Activated B cell treated with CpG ODN at 0.5 μM for 24 hours (primary cell): ENCODE measurements at regions of chr10 and their contacts with region 1.

Region 1: DNA sequence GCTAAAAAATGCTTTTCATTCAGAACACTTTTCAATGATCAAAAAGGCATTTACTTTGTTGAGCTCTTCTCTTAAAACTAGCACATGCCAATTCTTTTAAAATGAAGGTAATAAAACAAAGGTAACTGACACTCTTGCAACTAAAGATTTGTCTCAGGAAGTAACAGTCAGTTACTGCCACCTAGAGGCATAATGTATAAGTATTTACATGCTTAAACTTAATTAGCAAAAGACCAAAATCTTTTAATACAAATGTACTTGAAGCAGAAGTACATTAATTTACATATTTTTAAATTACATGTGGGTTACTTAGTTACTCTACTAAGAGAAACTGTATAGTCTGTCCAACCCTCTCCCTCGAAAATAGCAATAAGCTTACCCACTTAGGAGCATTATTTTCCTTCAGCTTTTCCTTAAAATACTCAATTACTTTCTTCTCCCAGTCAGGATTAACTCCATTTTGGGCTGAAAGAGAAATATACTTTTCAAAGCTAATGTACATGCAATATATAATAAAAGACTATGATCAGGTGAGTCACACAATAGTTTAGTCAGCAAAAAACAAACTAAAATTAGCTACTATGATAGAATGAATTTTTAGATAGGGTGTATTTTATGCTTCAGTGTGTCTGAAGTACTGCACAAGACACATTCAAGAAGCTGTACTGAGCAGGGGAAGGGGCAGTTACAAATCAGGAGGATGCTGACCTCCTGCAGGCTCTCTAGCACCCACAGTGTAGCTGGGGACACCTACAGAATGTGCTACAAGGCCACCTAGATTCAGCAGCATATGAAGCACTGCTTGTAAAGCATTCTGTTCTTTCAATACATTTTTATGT is 13.0 kb downstream of the MCMBP start:
- DNase-seq: no peak
- ATAC-seq: peak; percentile 50
- H3K4me3 Mint-ChIP-seq: no peak overlapping the region
- H3K27ac Mint-ChIP-seq: no peak overlapping the region
- H3K4me1 Mint-ChIP-seq: peaks cover 30% of the 10 kb centered on the region
- H3K27me3 Mint-ChIP-seq: no peaks in the 10 kb centered on the region
- CTCF ChIP-seq: peak; percentile 46

Region 2: DNA sequence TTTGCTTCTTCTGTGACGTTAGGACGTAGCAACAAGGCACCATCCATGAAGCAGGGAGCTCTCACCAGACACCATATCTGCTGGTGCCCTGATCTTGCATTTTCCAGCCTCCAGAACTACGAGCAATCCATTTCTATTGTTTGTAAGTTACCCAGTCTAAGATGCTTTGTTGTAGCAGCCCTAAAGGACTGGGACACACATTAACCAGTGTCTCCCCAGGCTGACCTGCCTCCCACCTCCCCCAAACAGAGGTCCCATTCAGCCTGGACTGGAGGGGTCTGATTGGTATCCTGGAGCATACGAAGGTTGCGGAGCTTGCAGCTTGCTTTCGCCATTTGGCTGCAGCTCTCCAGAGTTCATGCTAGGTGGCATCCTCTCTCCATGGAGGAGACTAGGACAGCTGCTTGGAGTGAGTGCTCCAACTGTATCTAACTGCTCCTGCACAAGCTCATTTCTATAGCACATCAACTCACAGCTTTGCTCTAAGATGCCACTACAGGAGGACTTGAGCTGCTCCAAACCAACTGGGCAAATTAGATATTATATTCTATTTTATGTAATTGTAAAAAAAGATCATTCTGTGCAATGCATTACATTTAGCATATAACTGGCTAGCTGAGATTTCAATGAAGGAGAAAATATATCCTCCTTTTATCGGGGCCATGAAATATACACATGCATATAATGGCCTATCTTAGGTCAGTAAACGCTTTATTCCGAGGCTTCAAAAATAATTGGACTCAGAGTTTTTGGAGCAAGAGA is 660.2 kb before region 1 on chr10:
- CTCF ChIA-PET with region 1: interaction called, 7 read pairs
- POLR2A ChIA-PET with region 1: no interaction called
- intact Hi-C with region 1: loop called (anchors 5 kb)
- DNase-seq: no peak
- ATAC-seq: peak; percentile 88
- H3K4me3 Mint-ChIP-seq: no peak overlapping the region
- H3K27ac Mint-ChIP-seq: no peak overlapping the region
- H3K4me1 Mint-ChIP-seq: peaks cover 3% of the 10 kb centered on the region
- H3K27me3 Mint-ChIP-seq: peaks cover 3% of the 10 kb centered on the region
- CTCF ChIP-seq: no peak

Region 3: DNA sequence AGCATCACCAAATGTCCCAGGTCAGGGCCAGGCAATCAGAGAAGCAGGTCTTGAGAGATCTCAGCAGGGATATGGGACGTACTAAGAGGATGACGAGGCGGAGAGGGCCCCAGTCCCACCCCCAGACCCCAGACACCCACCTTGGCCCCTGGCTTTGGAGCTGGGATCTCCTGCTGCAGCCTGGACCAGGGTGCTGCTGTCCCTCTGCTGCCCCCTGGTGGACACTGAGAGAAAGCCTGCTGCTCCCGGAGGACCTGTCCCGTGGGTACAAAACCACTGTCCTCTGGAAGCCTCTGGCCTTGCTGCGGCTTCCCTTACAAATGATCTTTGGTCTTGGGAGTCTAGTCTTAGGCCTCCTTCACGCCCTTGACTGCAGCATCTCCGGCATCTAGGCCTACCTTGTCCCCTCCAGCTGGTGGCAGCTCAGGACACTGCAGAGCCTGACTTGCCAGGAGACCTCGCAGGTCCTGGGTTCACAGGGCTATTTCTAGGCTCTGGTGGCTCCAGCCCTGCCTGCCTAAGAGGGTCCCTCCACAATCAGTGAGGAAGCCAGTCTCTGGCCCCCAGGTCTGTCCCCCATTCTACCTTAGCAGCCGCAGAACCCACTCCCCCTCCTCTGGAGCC is 414.2 kb before region 1 on chr10:
- CTCF ChIA-PET with region 1: no interaction called
- POLR2A ChIA-PET with region 1: no interaction called
- intact Hi-C with region 1: loop called (anchors 5 kb)
- DNase-seq: peak; percentile 74
- ATAC-seq: peak; percentile 70
- H3K4me3 Mint-ChIP-seq: no peak overlapping the region
- H3K27ac Mint-ChIP-seq: peak overlapping the region; percentile 61
- H3K4me1 Mint-ChIP-seq: peaks cover 31% of the 10 kb centered on the region
- H3K27me3 Mint-ChIP-seq: no peaks in the 10 kb centered on the region
- CTCF ChIP-seq: peak; percentile 57

Region 4: DNA sequence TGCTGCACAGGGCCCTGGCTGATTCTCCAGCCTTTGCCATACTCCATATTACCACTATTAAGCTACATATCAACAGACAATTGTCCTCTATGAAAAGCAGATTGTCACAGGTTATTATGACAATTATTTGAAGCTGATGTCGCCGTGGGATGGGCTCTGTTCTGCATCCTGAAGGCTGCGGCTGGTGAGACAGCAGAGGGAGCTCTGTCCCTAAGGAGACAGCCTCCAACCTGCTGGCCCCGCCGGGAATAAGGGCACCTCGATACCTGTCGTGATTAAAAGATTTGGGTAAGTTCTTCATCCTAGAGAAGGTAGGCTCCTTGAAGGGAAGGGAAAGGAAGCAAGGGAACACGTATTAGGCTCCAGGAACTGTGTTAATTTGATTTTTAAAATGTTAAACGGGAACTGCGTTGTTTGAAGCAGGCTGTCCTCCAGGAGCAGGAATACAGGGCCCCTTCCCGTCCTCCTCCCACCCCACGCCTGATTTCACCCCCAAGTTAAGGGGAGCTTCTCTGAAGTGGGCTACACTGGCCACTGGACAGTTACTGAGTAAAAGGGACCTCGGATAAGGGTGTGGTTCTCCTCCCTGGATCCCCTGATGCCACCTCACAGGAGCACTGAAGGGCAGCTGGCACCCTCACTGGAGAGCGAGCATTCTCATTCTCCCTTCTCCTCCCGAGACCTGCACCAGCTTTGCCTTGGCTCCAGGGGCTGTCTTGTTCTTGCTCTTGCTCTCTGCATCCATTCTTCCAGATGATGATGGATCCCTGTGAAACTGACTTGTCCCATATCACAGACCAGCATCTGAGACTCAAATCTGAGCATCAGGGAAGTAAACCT is 251.1 kb before region 1 on chr10:
- CTCF ChIA-PET with region 1: interaction called, 15 read pairs
- POLR2A ChIA-PET with region 1: no interaction called
- intact Hi-C with region 1: loop called (anchors 1 kb)
- DNase-seq: no peak
- ATAC-seq: no peak
- H3K4me3 Mint-ChIP-seq: no peak overlapping the region
- H3K27ac Mint-ChIP-seq: no peak overlapping the region
- H3K4me1 Mint-ChIP-seq: peaks cover 3% of the 10 kb centered on the region
- H3K27me3 Mint-ChIP-seq: peaks cover 2% of the 10 kb centered on the region
- CTCF ChIP-seq: no peak

Region 5: GRCh38 chr10:119686439-119687191 is 173.0 kb before region 1 on chr10:
- CTCF ChIA-PET with region 1: interaction called, 113 read pairs
- POLR2A ChIA-PET with region 1: no interaction called
- intact Hi-C with region 1: loop called (anchors 1 kb)
- DNase-seq: peak; percentile 68
- ATAC-seq: peak; percentile 93
- H3K4me3 Mint-ChIP-seq: peak overlapping the region; percentile 71
- H3K27ac Mint-ChIP-seq: peak overlapping the region; percentile 77
- H3K4me1 Mint-ChIP-seq: peaks cover 28% of the 10 kb centered on the region
- H3K27me3 Mint-ChIP-seq: peaks cover 3% of the 10 kb centered on the region
- CTCF ChIP-seq: peak; percentile 93

Region 6: GRCh38 chr10:119725828-119726675 is 133.6 kb before region 1 on chr10 and contains the start of gene INPP5F:
- CTCF ChIA-PET with region 1: interaction called, 5 read pairs
- POLR2A ChIA-PET with region 1: interaction called, 5 read pairs
- intact Hi-C with region 1: loop called (anchors 1 kb)
- DNase-seq: peak; percentile 96
- ATAC-seq: peak; percentile 92
- H3K4me3 Mint-ChIP-seq: peak within 1 kb of the TSS; percentile 92
- H3K27ac Mint-ChIP-seq: peak within 1 kb of the TSS; percentile 81
- H3K4me1 Mint-ChIP-seq: peaks cover 57% of the 10 kb centered on the region
- H3K27me3 Mint-ChIP-seq: no peaks in the 10 kb centered on the region
- CTCF ChIP-seq: no peak
- total RNA-seq, gene INPP5F: 45.9 and 53.5 TPM in 2 replicates

Region 7: GRCh38 chr10:119872860-119873681 is 13.4 kb after region 1 on chr10:
- CTCF ChIA-PET with region 1: interaction called, 9 read pairs
- POLR2A ChIA-PET with region 1: interaction called, 6 read pairs
- intact Hi-C with region 1: loop called (anchors 1 kb)
- DNase-seq: peak; percentile 89
- ATAC-seq: peak; percentile 92
- H3K4me3 Mint-ChIP-seq: peak overlapping the region; percentile 88
- H3K27ac Mint-ChIP-seq: peak overlapping the region; percentile 85
- H3K4me1 Mint-ChIP-seq: peaks cover 40% of the 10 kb centered on the region
- H3K27me3 Mint-ChIP-seq: no peaks in the 10 kb centered on the region
- CTCF ChIP-seq: no peak

Region 8: DNA sequence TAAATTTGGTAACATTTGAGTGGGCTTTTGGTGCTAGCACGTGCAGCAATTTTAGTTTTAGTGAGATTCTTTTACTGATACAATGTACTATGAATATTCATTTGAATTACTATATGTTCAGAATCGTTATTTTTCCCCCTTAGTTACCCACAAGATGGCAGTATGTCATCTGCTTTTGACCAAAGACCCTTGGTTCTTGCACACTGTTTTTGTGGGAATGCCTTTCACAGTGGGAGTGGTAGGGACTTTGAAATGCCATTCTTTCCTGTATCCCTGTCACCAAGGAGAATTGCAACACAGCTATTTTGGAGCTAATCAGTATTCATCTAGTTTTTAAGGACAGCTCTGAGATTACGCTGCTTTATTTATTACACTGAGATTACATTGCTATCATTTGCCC is 73.5 kb after region 1 on chr10:
- CTCF ChIA-PET with region 1: no interaction called
- POLR2A ChIA-PET with region 1: no interaction called
- intact Hi-C with region 1: no loop called
- DNase-seq: no peak
- ATAC-seq: no peak
- H3K4me3 Mint-ChIP-seq: no peak overlapping the region
- H3K27ac Mint-ChIP-seq: no peak overlapping the region
- H3K4me1 Mint-ChIP-seq: peaks cover 1% of the 10 kb centered on the region
- H3K27me3 Mint-ChIP-seq: no peaks in the 10 kb centered on the region
- CTCF ChIP-seq: no peak